Ascending aorta (tissue), 2 donors: ENCODE measurements at regions of chr1 and their contacts with region 1.

Region 1: GRCh38 chr1:153990468-153991150 is at the start of gene RPS27:
- DNase-seq: peak; percentile 83 to 97
- H3K4me3 ChIP-seq: peak within 1 kb of the TSS; percentile 64 to 73
- H3K27ac ChIP-seq: peak within 1 kb of the TSS; percentile 86 to 88
- H3K4me1 ChIP-seq: peaks cover 7 to 28% of the 10 kb centered on the region in 2 donors
- H3K27me3 ChIP-seq: no peaks in the 10 kb centered on the region
- CTCF ChIP-seq: peak in 1 of 3 experiments; percentile 13
- total RNA-seq, gene RPS27: 707 TPM

Region 2: DNA sequence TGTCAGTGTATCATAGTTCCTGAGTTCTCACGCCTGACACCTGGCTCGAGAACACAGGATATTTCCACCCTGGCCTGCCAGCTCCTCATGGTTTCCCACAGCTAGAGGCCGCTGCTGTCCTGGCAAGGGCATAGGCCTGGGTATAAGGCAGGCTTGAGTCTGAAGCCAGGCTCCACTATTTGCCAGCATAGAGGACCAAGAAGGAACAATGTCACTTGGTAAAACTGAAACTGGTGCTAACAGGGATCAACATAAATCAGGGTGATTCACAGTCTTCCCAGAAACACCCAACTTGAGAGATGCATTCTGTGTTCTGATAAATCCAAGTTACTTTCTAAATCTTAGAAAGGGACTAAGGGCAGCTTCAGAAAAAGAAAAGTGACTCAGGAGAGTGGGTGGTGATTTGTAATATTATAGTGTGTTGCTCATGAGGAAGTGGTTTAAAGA is 418.0 kb before region 1 on chr1:
- intact Hi-C with region 1: loop called (anchors 2 kb)
- DNase-seq: peak in 1 of 2 donors; percentile 93
- H3K4me3 ChIP-seq: no peak overlapping the region
- H3K27ac ChIP-seq: peak overlapping the region; percentile 70 to 82
- H3K4me1 ChIP-seq: peaks cover 4 to 17% of the 10 kb centered on the region in 2 donors
- H3K27me3 ChIP-seq: no peaks in the 10 kb centered on the region
- CTCF ChIP-seq: peak; percentile 85 to 92 (median 90)

Region 3: GRCh38 chr1:153796791-153797659 is 193.6 kb before region 1 on chr1:
- intact Hi-C with region 1: loop called (anchors 2 kb)
- DNase-seq: peak in 1 of 2 donors; percentile 89
- H3K4me3 ChIP-seq: no peak overlapping the region
- H3K27ac ChIP-seq: no peak overlapping the region
- H3K4me1 ChIP-seq: no peaks in the 10 kb centered on the region
- H3K27me3 ChIP-seq: no peaks in the 10 kb centered on the region
- CTCF ChIP-seq: peak; percentile 88 to 92 (median 90)

Region 4: DNA sequence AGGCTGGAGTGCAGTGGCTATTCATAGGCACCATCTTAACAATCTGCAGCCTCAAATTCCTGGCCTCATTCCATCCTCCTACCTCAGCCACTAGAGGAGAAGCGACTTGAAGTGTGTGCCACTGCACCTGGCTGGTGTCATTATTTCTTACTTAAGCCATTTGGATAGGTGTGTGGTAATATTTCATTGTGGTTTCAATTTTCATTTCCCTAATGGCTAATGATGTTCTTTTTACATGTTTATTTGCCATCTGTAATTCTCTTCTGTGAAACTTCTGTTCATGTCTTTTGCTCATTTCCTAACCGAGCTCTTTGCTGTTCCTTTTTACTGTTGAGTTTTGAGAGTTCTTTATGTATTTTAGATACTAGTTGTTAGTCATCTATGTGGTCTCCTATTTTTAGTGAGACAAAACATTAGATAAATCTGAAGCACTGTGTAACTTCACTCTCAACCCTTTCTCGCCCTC is 148.6 kb before region 1 on chr1:
- intact Hi-C with region 1: no loop called
- DNase-seq: no peak
- H3K4me3 ChIP-seq: no peak overlapping the region
- H3K27ac ChIP-seq: peak overlapping the region; percentile 37 to 56
- H3K4me1 ChIP-seq: peaks cover 0 to 8% of the 10 kb centered on the region in 2 donors
- H3K27me3 ChIP-seq: no peaks in the 10 kb centered on the region
- CTCF ChIP-seq: no peak

Region 5: GRCh38 chr1:153922972-153923925 is 67.4 kb before region 1 on chr1 and contains the start of gene GATAD2B:
- intact Hi-C with region 1: loop called (anchors 2 kb)
- DNase-seq: peak; percentile 99 to 100
- H3K4me3 ChIP-seq: peak within 1 kb of the TSS; percentile 72 to 86
- H3K27ac ChIP-seq: peak within 1 kb of the TSS; percentile 88 to 97
- H3K4me1 ChIP-seq: peaks cover 6 to 24% of the 10 kb centered on the region in 2 donors
- H3K27me3 ChIP-seq: no peaks in the 10 kb centered on the region
- CTCF ChIP-seq: no peak
- total RNA-seq, gene GATAD2B: 9.5 TPM

Region 6: GRCh38 chr1:153958111-153958960 is 32.3 kb before region 1 on chr1 and contains the start of gene CRTC2:
- intact Hi-C with region 1: loop called (anchors 1 kb)
- DNase-seq: peak; percentile 98 to 100
- H3K4me3 ChIP-seq: peak within 1 kb of the TSS; percentile 87 to 97
- H3K27ac ChIP-seq: peak within 1 kb of the TSS; percentile 91 to 97
- H3K4me1 ChIP-seq: peaks cover 17 to 38% of the 10 kb centered on the region in 2 donors
- H3K27me3 ChIP-seq: no peaks in the 10 kb centered on the region
- CTCF ChIP-seq: no peak
- total RNA-seq, gene CRTC2: 10.1 TPM

Region 7: DNA sequence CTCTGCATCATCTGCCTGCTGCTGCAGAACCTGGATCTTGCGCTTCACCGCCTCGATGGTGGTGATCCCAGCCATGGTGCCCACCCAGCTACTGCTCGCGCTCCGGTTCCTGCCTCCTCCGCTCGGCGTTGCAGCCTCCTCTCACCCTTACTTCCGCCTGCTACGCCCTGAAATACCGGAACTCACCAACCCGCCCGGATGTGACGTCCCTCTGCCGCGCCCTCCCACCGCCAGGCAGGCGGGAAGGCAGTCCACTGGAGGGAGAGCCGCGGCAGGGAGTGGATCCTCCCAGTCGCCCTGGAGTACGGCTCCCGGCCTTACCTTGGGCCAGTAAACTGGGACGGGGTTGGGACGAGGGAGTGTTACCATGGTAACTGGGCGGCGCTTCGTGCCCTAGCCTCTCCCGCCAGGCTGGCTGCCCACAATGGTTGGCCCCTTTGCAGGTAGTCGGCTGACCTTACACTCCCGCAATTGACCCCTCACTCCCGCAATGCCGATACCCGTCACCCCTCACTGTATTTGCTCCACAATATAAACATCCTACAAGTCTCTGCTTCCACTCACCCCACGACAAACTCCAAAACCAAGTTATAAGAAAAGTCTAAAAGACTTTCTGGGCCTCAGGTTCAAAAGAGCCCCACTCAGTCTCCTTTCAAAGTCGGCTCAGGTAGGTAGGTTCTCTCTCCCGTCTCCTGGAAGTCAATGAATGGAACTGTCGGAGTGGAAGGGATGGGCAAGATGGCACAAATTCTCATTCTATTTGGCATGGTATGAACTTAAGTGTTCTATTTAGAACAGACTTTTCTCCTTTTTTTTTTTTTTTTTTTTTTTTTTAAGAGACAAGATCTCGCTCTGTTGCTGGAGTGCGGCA is 192.7 kb after region 1 on chr1:
- intact Hi-C with region 1: loop called (anchors 2 kb)
- DNase-seq: peak; percentile 85 to 98
- H3K4me3 ChIP-seq: peak overlapping the region; percentile 76 to 88
- H3K27ac ChIP-seq: peak overlapping the region; percentile 81 to 89
- H3K4me1 ChIP-seq: peaks cover 17 to 32% of the 10 kb centered on the region in 2 donors
- H3K27me3 ChIP-seq: no peaks in the 10 kb centered on the region
- CTCF ChIP-seq: peak in 1 of 3 experiments; percentile 23

Region 8: DNA sequence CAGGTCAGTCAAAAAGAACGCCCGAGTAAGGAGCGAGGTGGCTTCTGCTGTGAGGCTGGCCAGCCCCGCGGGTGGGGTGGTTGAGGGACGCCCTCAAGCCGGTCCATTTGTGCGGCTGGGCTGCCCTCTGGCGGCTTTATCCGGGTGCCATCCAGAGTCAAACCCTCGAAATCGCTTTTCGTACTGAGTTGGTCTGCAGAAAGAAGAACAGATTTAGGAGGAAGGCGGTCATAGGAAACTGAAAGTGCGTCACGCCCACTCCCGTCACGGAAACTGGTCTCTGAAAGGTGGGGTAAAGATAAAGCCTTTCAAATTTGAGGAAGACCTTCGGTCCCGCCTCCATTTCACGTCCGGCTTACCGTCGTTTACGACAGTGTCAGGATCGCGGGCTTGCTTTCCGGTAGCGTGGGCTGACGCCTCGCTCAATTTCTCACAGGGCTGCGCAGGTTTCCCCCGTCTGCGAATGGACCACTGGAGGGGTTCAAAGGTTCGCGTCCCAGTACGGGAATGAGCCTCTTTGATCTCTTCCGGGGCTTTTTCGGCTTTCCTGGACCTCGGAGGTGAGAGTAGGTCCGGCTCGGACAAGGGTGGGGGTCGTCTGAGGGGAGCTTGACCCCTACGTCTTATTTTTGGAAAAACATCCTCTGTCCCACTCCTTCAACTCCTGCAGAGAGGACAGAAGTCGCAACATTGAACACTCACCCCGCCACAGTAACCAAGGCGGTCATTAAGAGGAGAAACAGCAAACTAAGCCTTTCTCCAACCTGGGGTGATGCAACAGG is 281.8 kb after region 1 on chr1 and contains the start of gene HAX1:
- intact Hi-C with region 1: loop called (anchors 2 kb)
- DNase-seq: peak; percentile 87 to 97
- H3K4me3 ChIP-seq: peak within 1 kb of the TSS; percentile 75 to 97
- H3K27ac ChIP-seq: peak within 1 kb of the TSS; percentile 81 to 96
- H3K4me1 ChIP-seq: peaks cover 0 to 5% of the 10 kb centered on the region in 2 donors
- H3K27me3 ChIP-seq: no peaks in the 10 kb centered on the region
- CTCF ChIP-seq: peak; percentile 75 to 90 (median 89)
- total RNA-seq, gene HAX1: 270 TPM